Adrenal gland (tissue), 19 donors: ENCODE measurements at regions of chr3 and their contacts with region 1.

Region 1: DNA sequence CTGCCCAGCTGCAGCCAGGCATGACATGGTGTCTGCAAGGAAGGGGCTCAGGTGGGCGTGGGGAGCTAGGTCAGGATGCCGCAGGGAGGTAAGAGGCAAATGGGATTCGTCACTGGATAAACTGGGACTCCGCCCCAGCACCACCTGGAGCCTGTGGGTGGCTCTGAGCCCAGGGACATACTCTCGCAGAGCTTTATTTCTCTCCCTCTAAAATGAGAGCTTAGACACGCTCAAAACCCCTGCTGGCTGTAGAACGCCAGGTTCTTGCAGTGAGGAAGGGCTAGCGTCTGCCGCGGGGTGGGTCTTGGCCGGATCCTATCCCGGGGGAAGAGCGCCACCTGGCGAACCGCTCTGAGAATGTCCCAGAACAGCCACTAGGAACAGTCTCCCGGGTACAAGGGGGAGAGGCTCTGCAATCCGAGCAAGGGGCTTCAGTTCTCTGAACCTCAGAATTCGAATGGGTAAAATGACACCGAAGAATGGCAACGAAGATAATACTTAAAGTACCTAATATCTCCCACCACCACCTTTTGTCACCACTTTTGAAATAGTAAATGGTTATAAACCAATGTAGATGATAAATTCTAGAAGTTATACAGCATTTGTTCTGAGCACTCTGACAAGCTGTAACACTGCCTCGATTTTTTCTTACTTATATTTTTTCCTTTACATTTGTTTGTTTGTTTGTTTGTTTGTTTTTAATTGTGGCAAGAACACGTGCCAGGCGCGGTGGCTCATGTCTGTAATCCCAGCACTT is 53.2 kb upstream of the SRGAP3 start:
- DNase-seq: peak; percentile 75 to 91 (median 83)
- H3K4me3 ChIP-seq: peak overlapping the region in 1 of 4 donors; percentile 31
- H3K27ac ChIP-seq: no peak overlapping the region
- H3K4me1 ChIP-seq: peaks cover 0 to 6% of the 10 kb centered on the region in 2 donors
- H3K27me3 ChIP-seq: no peaks in the 10 kb centered on the region
- CTCF ChIP-seq: peak; percentile 87 to 98 (median 94)
- POLR2A ChIP-seq: no peak

Region 2: GRCh38 chr3:8741581-8742261 is 560.9 kb before region 1 on chr3:
- intact Hi-C with region 1: no loop called
- DNase-seq: peak in 6 of 7 donors; percentile 26 to 71 (median 51)
- H3K4me3 ChIP-seq: no peak overlapping the region
- H3K27ac ChIP-seq: no peak overlapping the region
- H3K4me1 ChIP-seq: peaks cover 0 to 8% of the 10 kb centered on the region in 2 donors
- H3K27me3 ChIP-seq: no peaks in the 10 kb centered on the region
- CTCF ChIP-seq: no peak
- POLR2A ChIP-seq: no peak

Region 3: DNA sequence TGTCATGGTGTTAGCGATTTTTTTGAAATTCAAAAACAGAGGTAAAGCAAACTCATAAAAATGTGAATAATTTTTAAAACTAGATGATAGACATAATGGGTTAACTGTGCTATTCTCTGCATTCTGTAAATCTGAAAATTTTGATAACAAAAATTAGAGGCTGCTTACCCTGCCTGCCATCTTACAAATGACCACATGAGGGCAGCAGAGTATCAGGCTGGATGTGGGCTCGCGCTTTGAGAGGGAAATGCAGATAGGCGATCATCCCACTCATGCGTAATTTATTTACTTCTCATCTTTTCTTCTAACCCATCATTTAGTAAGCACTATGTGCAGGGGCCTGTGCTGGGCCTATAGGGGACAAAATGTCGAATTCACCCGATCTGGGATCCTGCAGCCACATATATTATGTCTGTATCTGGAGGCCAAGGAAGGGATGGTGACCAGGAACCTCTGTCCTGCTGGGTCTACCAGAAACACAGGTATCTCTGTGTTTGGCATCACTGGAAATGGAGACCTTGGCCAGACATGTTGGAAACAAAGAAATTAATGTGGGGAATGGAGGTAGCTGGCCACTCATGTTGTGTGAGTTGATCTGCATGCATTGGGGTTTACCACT is 331.5 kb before region 1 on chr3:
- intact Hi-C with region 1: loop called (anchors 5 kb)
- DNase-seq: peak; percentile 42 to 90 (median 73)
- H3K4me3 ChIP-seq: no peak overlapping the region
- H3K27ac ChIP-seq: no peak overlapping the region
- H3K4me1 ChIP-seq: no peaks in the 10 kb centered on the region
- H3K27me3 ChIP-seq: no peaks in the 10 kb centered on the region
- CTCF ChIP-seq: peak; percentile 96 to 100 (median 98)
- POLR2A ChIP-seq: no peak

Region 4: DNA sequence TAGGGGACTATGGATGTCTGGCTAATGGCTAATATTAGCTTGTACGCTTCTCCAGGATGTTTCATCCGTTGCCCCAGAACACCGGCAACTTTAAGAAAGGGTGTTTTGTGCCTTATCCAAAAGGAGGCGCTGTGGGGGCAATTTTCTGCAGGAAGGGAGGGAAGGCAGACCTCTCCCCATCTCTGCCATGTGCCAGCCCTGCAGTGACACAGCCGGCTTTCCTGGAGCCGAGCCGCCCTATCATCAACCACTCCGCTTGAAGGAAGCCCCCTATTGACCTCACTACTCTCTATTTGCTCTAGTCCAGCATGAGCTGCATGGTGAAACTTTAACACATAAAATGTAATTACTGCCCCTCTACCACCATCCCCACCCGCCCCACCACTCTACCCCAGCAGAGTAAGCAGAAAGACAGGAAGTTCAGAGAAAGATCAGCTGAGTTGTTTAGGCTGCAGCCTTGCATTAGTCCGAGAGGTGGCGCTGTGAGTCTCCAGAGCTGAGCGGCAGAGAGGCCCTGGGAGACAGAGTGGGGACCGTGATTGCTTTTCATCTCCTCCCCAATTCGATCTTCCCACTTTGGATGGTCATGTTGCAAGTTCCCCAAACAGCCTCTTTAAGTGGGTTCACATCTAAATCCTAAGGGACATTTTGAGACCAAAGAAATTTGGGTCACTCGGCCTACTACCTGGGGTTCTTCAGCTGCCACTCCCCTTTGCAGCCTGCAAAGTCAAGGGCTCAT is 314.8 kb before region 1 on chr3:
- intact Hi-C with region 1: loop called (anchors 5 kb)
- DNase-seq: peak; percentile 61 to 89 (median 72)
- H3K4me3 ChIP-seq: no peak overlapping the region
- H3K27ac ChIP-seq: no peak overlapping the region
- H3K4me1 ChIP-seq: no peaks in the 10 kb centered on the region
- H3K27me3 ChIP-seq: no peaks in the 10 kb centered on the region
- CTCF ChIP-seq: peak; percentile 67 to 83 (median 81)
- POLR2A ChIP-seq: no peak

Region 5: GRCh38 chr3:9078561-9079240 is 223.9 kb before region 1 on chr3:
- intact Hi-C with region 1: loop called in 1 of 2 experiments (anchors 10 kb)
- DNase-seq: no peak
- H3K4me3 ChIP-seq: no peak overlapping the region
- H3K27ac ChIP-seq: no peak overlapping the region
- H3K4me1 ChIP-seq: no peaks in the 10 kb centered on the region
- H3K27me3 ChIP-seq: no peaks in the 10 kb centered on the region
- CTCF ChIP-seq: no peak
- POLR2A ChIP-seq: no peak

Region 6: DNA sequence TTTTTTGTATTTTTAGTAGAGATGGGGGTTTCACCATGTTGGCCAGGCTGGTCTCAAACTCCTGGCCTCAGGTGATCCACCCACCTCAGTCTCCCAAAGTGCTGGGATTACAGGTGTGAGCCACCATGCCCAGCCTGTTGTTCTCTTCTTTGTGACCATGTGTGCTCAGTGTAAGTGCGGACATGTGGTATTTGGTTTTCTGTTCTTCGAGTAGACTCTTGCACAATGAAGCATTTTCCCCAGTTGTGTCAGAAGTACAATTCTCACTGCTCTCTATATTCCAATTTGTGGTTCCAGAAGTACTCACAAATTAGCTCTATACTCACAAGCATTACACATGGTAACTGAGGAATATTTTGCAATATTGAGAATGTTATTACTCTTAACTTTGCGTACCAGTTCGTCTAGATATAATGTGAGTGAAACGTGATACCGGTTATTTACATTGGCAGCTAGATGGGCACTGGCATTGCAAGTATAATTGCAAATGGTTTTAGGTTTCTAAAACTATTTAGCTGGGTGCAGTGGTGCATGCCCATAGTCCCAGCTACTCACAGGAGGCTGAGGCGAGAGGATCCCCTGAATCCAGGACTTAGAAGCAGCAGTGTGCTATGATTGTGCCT is 312.5 kb after region 1 on chr3:
- intact Hi-C with region 1: no loop called
- DNase-seq: no peak
- H3K4me3 ChIP-seq: no peak overlapping the region
- H3K27ac ChIP-seq: no peak overlapping the region
- H3K4me1 ChIP-seq: no peaks in the 10 kb centered on the region
- H3K27me3 ChIP-seq: peaks cover 4% of the 10 kb centered on the region
- CTCF ChIP-seq: no peak
- POLR2A ChIP-seq: no peak